ENCODE measurements at regions of chr3 and their contacts with region 1.

Region 1: GRCh38 chr3:155870133-155870944 is at the start of gene GMPS:
- DNase-seq: peak; percentile 97
- ATAC-seq: peak; percentile 92
- H3K4me3 Mint-ChIP-seq: peak within 1 kb of the TSS; percentile 92
- H3K27ac Mint-ChIP-seq: peak within 1 kb of the TSS; percentile 93
- H3K4me1 Mint-ChIP-seq: peaks cover 18% of the 10 kb centered on the region
- H3K27me3 Mint-ChIP-seq: no peaks in the 10 kb centered on the region
- CTCF ChIP-seq: no peak
- total RNA-seq, gene GMPS: 42.2 and 45.1 TPM in 2 replicates

Region 2: GRCh38 chr3:154323891-154324738 is 1546.2 kb before region 1 on chr3 and contains the start of gene DHX36:
- CTCF ChIA-PET with region 1: no interaction called
- POLR2A ChIA-PET with region 1: no interaction called
- intact Hi-C with region 1: loop called (anchors 1 kb)
- DNase-seq: peak; percentile 83
- ATAC-seq: peak; percentile 88
- H3K4me3 Mint-ChIP-seq: peak within 1 kb of the TSS; percentile 95
- H3K27ac Mint-ChIP-seq: peak within 1 kb of the TSS; percentile 97
- H3K4me1 Mint-ChIP-seq: peaks cover 31% of the 10 kb centered on the region
- H3K27me3 Mint-ChIP-seq: no peaks in the 10 kb centered on the region
- CTCF ChIP-seq: no peak
- total RNA-seq, gene DHX36: 95.9 and 110 TPM in 2 replicates

Region 3: GRCh38 chr3:155712008-155712407 is 158.3 kb before region 1 on chr3:
- CTCF ChIA-PET with region 1: no interaction called
- POLR2A ChIA-PET with region 1: no interaction called
- intact Hi-C with region 1: no loop called
- DNase-seq: no peak
- ATAC-seq: peak; percentile 72
- H3K4me3 Mint-ChIP-seq: no peak overlapping the region
- H3K27ac Mint-ChIP-seq: no peak overlapping the region
- H3K4me1 Mint-ChIP-seq: no peaks in the 10 kb centered on the region
- H3K27me3 Mint-ChIP-seq: no peaks in the 10 kb centered on the region
- CTCF ChIP-seq: no peak

Region 4: DNA sequence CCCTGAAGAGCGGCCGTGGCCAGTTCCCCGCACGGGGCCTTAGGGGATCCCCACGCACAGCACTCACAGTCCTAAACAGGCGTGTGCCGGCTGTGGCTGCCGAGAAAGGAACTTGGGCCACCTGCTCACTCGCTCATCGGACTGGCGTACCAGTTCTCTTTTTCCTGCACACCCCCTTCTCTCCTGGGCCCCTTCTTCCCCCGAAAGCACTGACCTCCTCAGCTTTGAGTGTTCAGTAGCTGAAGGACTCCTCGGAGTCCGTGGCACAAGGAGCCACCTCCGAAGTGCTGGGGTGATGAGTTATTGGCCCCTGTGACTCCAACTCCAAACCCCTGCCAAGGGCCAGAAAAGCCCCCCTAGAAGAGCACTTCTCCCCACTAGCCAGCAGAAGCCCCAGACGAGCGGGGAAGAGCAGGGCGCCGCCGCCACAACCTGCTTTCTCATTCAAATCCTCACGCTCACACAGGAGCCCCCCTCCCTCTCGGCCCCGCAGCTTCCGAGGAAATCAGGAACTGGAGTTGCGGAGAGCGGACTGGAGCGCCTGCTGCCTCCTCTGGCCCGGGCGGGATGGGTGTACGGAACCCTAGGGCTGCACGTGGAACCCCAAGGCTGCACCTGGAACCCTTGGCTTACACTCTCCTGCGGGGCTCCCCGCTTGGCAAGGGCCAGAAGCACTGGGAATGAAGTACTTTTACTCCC is 125.6 kb before region 1 on chr3 and contains the start of gene PLCH1:
- CTCF ChIA-PET with region 1: no interaction called
- POLR2A ChIA-PET with region 1: no interaction called
- intact Hi-C with region 1: loop called (anchors 2 kb)
- DNase-seq: peak; percentile 20
- ATAC-seq: peak; percentile 81
- H3K4me3 Mint-ChIP-seq: peak within 1 kb of the TSS; percentile 87
- H3K27ac Mint-ChIP-seq: peak within 1 kb of the TSS; percentile 66
- H3K4me1 Mint-ChIP-seq: peaks cover 25% of the 10 kb centered on the region
- H3K27me3 Mint-ChIP-seq: peaks cover 20% of the 10 kb centered on the region
- CTCF ChIP-seq: no peak
- total RNA-seq, gene PLCH1: 0.12 and 0.27 TPM in 2 replicates

Region 5: DNA sequence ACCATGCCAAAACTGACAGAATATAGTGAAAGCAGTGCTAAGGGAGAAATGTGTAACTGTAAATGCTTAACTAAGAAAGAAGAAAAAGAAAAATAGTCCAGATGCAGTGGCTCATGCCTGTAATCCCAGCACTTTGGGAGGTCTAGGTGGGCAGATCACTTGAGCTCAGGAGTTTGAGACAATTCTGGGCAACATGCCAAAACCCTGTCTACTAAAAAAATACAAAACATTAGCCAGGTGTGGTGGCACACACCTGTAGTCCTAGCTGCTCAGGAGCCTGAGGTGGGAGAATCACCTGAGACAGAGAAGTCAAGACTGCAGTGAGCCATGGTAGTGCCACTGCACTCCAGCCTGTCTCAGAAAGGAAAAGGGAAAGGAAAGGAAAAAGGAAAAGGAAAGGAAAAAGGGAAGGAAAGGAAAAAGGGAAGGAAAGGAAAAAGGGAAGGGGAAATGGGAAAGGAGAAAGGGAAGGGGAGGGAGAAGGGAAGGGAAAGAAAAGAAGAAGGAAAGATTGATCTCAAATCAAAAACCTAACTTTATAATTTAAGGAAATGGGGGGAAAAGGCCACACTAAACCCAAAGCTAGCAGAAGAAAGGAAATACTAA is 84.6 kb before region 1 on chr3:
- CTCF ChIA-PET with region 1: no interaction called
- POLR2A ChIA-PET with region 1: no interaction called
- intact Hi-C with region 1: no loop called
- DNase-seq: no peak
- ATAC-seq: no peak
- H3K4me3 Mint-ChIP-seq: no peak overlapping the region
- H3K27ac Mint-ChIP-seq: no peak overlapping the region
- H3K4me1 Mint-ChIP-seq: no peaks in the 10 kb centered on the region
- H3K27me3 Mint-ChIP-seq: no peaks in the 10 kb centered on the region
- CTCF ChIP-seq: no peak

Region 6: DNA sequence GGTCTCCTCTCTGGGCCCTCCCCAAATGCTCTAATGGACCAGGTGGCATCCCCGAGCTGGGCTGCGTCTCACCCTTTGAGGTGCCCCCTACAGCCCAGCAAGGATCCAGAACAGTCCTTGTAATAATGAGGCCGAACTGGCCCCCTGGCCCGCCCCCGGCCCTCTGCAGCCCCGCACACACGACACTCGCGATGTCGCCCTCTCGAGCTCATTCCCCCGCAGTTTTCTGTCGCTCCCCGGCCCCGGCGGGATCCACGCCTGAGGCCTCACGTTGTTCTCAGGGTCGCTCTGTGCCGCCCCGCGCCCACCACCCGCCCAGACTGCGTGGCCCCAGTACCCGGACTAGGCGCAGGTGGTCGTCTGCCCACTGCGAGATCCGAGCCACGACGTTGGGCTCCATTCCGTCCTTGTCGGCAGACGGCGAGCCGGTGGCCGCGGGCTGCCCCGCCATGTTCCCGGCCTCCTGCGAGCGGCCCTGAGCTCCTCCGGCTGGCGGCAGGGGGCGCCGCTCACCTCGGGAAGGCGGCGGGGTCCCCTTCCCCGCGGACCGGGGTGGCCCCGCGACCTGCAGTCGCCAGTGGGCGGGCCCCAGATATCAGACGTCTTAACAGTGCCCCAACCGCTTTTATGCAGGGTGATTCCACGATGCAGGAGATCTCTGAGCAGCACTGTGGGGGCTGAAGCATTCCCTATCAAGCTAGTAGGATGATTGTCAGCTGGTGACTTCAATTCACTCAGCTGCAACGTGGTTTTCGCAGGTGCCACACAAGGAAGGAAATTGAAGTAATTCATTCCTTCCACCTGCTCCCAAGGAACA is 64.3 kb before region 1 on chr3 and contains the start of gene C3orf33:
- CTCF ChIA-PET with region 1: interaction called, 25 read pairs
- POLR2A ChIA-PET with region 1: interaction called, 7 read pairs
- intact Hi-C with region 1: loop called (anchors 1 kb)
- DNase-seq: peak; percentile 75
- ATAC-seq: peak; percentile 93
- H3K4me3 Mint-ChIP-seq: peak within 1 kb of the TSS; percentile 90
- H3K27ac Mint-ChIP-seq: peak within 1 kb of the TSS; percentile 80
- H3K4me1 Mint-ChIP-seq: peaks cover 3% of the 10 kb centered on the region
- H3K27me3 Mint-ChIP-seq: peaks cover 6% of the 10 kb centered on the region
- CTCF ChIP-seq: peak; percentile 82
- total RNA-seq, gene C3orf33: 1.6 and 2.4 TPM in 2 replicates

Region 7: GRCh38 chr3:156826144-156826895 is 956.0 kb after region 1 on chr3 and contains the start of gene LEKR1:
- CTCF ChIA-PET with region 1: no interaction called
- POLR2A ChIA-PET with region 1: no interaction called
- intact Hi-C with region 1: loop called (anchors 5 kb)
- DNase-seq: peak; percentile 74
- ATAC-seq: peak; percentile 73
- H3K4me3 Mint-ChIP-seq: peak within 1 kb of the TSS; percentile 90
- H3K27ac Mint-ChIP-seq: peak within 1 kb of the TSS; percentile 96
- H3K4me1 Mint-ChIP-seq: peaks cover 21% of the 10 kb centered on the region
- H3K27me3 Mint-ChIP-seq: no peaks in the 10 kb centered on the region
- CTCF ChIP-seq: no peak
- total RNA-seq, gene LEKR1: 2.8 and 2.9 TPM in 2 replicates